ENCODE measurements at regions of chr2 and their contacts with region 1.

Region 1: GRCh38 chr2:25041928-25042320 is at the start of gene EFR3B:
- DNase-seq: peak; percentile 86 to 94 (median 89)
- H3K4me3 ChIP-seq: peak within 1 kb of the TSS; percentile 42 to 60
- H3K4me3 Mint-ChIP-seq: peak within 1 kb of the TSS; percentile 82 to 92 (median 88)
- H3K27ac ChIP-seq: no peak within 1 kb of the TSS
- H3K27ac Mint-ChIP-seq: peak within 1 kb of the TSS in 5 of 7 donors; percentile 22 to 76 (median 62)
- H3K4me1 ChIP-seq: peaks cover 19% of the 10 kb centered on the region
- H3K4me1 Mint-ChIP-seq: peaks cover 12 to 21% (median 16%) of the 10 kb centered on the region in 4 donors
- H3K27me3 ChIP-seq: peaks cover 24% of the 10 kb centered on the region
- H3K27me3 Mint-ChIP-seq: peaks cover 29 to 37% of the 10 kb centered on the region in 2 donors
- total RNA-seq, gene EFR3B: 0.12 to 0.14 TPM

Region 2: GRCh38 chr2:24360050-24360962 is 681.6 kb before region 1 on chr2 and contains the start of gene ITSN2:
- CTCF ChIA-PET with region 1: no interaction called
- POLR2A ChIA-PET with region 1: no interaction called
- intact Hi-C with region 1: loop called (anchors 5 kb)
- DNase-seq: peak; percentile 82 to 90 (median 86)
- H3K4me3 ChIP-seq: peak within 1 kb of the TSS; percentile 24 to 89
- H3K4me3 Mint-ChIP-seq: peak within 1 kb of the TSS; percentile 90 to 96 (median 94)
- H3K27ac ChIP-seq: peak within 1 kb of the TSS; percentile 96
- H3K27ac Mint-ChIP-seq: peak within 1 kb of the TSS; percentile 91 to 98 (median 96)
- H3K4me1 ChIP-seq: peaks cover 31% of the 10 kb centered on the region
- H3K4me1 Mint-ChIP-seq: peaks cover 18 to 41% (median 30%) of the 10 kb centered on the region in 4 donors
- H3K27me3 ChIP-seq: no peaks in the 10 kb centered on the region
- H3K27me3 Mint-ChIP-seq: no peaks in the 10 kb centered on the region
- total RNA-seq, gene ITSN2: 133 to 135 TPM

Region 3: GRCh38 chr2:24920098-24920808 is 121.7 kb before region 1 on chr2 and contains the start of gene ADCY3:
- CTCF ChIA-PET with region 1: no interaction called
- POLR2A ChIA-PET with region 1: no interaction called
- intact Hi-C with region 1: loop called (anchors 2 kb)
- DNase-seq: peak; percentile 52 to 70 (median 62)
- H3K4me3 ChIP-seq: peak within 1 kb of the TSS; percentile 49 to 62
- H3K4me3 Mint-ChIP-seq: peak within 1 kb of the TSS; percentile 91 to 97 (median 94)
- H3K27ac ChIP-seq: peak within 1 kb of the TSS; percentile 35
- H3K27ac Mint-ChIP-seq: peak within 1 kb of the TSS; percentile 83 to 94 (median 88)
- H3K4me1 ChIP-seq: peaks cover 36% of the 10 kb centered on the region
- H3K4me1 Mint-ChIP-seq: peaks cover 23 to 43% (median 30%) of the 10 kb centered on the region in 4 donors
- H3K27me3 ChIP-seq: no peaks in the 10 kb centered on the region
- H3K27me3 Mint-ChIP-seq: no peaks in the 10 kb centered on the region
- total RNA-seq, gene ADCY3: 14.7 to 14.9 TPM

Region 4: GRCh38 chr2:25131567-25132298 is 89.8 kb after region 1 on chr2:
- CTCF ChIA-PET with region 1: no interaction called
- POLR2A ChIA-PET with region 1: no interaction called
- intact Hi-C with region 1: loop called (anchors 10 kb)
- DNase-seq: no peak
- H3K4me3 ChIP-seq: no peak overlapping the region
- H3K4me3 Mint-ChIP-seq: peak overlapping the region; percentile 12 to 81 (median 66)
- H3K27ac ChIP-seq: no peak overlapping the region
- H3K27ac Mint-ChIP-seq: peak overlapping the region in 1 of 7 donors; percentile 38
- H3K4me1 ChIP-seq: no peaks in the 10 kb centered on the region
- H3K4me1 Mint-ChIP-seq: peaks cover 3 to 16% (median 9%) of the 10 kb centered on the region in 4 donors
- H3K27me3 ChIP-seq: peaks cover 37% of the 10 kb centered on the region
- H3K27me3 Mint-ChIP-seq: peaks cover 29 to 44% of the 10 kb centered on the region in 2 donors